ENCODE measurements at regions of chrX and their contacts with region 1.

Region 1: DNA sequence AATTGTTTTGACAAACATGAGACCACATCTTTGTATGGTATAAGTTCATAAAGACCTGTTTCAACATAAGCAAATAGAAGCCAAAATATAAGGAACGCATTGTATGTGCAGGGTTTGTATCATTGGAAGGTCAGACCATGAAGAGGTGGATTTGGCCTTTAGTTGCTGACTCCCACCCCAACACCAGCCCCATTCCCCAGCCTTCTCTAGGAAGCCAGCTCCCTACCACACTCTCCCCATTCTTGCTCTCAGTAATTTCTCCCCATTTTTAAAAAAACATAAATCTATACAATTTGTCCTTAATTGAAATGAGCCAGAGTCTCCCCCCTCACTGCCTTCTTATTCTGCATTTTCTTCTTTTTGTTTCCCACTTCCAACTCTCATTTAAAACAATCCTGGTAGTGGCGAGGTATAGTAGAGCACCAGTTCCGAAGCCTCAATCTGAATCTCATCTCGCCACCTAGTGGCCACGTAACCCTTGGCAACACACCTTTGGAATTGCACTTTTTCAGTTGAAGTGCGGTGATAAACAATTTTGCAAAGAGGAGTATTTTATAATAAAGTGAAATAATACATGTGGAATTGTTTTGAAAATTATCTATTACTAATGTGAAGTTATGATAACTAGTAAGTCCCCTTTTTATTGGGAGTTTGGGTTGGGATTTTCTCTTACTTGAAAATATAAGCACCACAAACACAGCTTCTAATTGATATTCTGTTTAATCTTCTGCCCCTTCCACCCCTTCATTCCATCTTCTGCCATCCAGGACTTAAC is 126.6 kb downstream of the ASB9 start:
- DNase-seq: no peak
- ATAC-seq: peak; percentile 94
- H3K4me3 ChIP-seq: no peak overlapping the region
- H3K27ac ChIP-seq: no peak overlapping the region
- H3K4me1 ChIP-seq: no peaks in the 10 kb centered on the region
- H3K27me3 ChIP-seq: no peaks in the 10 kb centered on the region; a peak in 1 of 4 replicates
- CTCF ChIP-seq: peak; percentile 79 to 81 (median 79)
- EP300 ChIP-seq: no peak
- POLR2A ChIP-seq: no peak
- RAD21 ChIP-seq: peak; percentile 80

Region 2: DNA sequence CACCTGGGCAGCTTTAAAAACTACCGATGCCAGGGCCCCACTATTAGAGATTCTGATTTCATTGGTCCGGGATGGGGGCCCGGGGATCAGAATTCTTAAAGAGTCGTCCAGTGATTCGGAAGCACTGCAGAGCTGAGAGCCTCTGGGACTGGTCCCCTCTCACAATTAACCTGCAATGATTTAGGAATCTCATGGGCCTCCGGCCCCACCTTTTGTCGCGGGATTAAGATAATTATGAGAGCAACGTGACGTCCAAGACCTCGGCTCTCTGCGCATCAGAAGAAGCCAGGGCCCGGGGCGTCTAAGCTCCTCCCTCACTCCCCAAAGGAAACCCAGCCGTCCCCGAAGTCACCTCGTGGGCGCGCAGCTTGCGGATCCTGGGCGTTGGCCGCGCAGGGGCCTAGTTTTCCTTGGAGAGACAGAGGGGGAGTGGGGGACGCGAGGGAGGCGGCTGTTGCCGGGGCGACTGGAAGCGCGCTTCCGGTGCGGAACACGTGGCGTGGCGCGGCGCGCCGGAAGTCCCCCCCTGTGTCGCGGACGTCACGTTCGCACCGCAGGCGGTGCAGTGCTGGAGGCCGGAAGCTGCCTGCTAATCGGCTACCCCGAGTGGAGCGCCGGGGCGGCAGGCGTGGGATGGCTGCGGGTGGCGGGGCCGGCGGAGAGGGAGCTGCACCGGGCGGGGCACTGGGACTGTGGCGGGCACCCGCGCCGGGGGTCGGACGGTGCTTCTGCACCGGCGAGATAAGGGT is 1113.6 kb before region 1 on chrX and contains the start of gene GEMIN8:
- CTCF ChIA-PET with region 1: no interaction called
- POLR2A ChIA-PET with region 1: no interaction called
- RAD21 ChIA-PET with region 1: no interaction called
- SMC1A ChIA-PET with region 1: no interaction called
- in situ Hi-C with region 1: loop called (anchors 10 kb)
- intact Hi-C with region 1: no loop called
- DNase-seq: peak; percentile 46
- ATAC-seq: peak; percentile 84
- H3K4me3 ChIP-seq: peak within 1 kb of the TSS; percentile 81
- H3K27ac ChIP-seq: peak within 1 kb of the TSS; percentile 77
- H3K4me1 ChIP-seq: peaks cover 6% of the 10 kb centered on the region
- H3K27me3 ChIP-seq: no peaks in the 10 kb centered on the region
- CTCF ChIP-seq: no peak
- EP300 ChIP-seq: 0 out of 4 replicates have a peak, but pooled peaks of 1 of the 2 experiments have one; percentile 4
- POLR2A ChIP-seq: peak; percentile 91
- RAD21 ChIP-seq: no peak
- polyA plus RNA-seq, gene GEMIN8: 18.4 to 29.5 TPM

Region 3: GRCh38 chrX:14095702-14096101 is 1047.5 kb before region 1 on chrX:
- CTCF ChIA-PET with region 1: interaction called, 16 read pairs
- POLR2A ChIA-PET with region 1: no interaction called
- RAD21 ChIA-PET with region 1: interaction called, 5 read pairs
- SMC1A ChIA-PET with region 1: interaction called, 3 read pairs
- in situ Hi-C with region 1: loop called (anchors 10 kb)
- intact Hi-C with region 1: loop called (anchors 5 kb)
- DNase-seq: peak; percentile 4
- ATAC-seq: peak; percentile 97
- H3K4me3 ChIP-seq: no peak overlapping the region
- H3K27ac ChIP-seq: no peak overlapping the region
- H3K4me1 ChIP-seq: no peaks in the 10 kb centered on the region
- H3K27me3 ChIP-seq: no peaks in the 10 kb centered on the region; a peak in 1 of 4 replicates
- CTCF ChIP-seq: peak; percentile 72 to 80 (median 76)
- EP300 ChIP-seq: no peak
- POLR2A ChIP-seq: no peak
- RAD21 ChIP-seq: peak; percentile 77

Region 4: GRCh38 chrX:14697451-14697850 is 445.8 kb before region 1 on chrX:
- CTCF ChIA-PET with region 1: no interaction called
- POLR2A ChIA-PET with region 1: no interaction called
- RAD21 ChIA-PET with region 1: no interaction called
- SMC1A ChIA-PET with region 1: interaction called, 3 read pairs
- in situ Hi-C with region 1: no loop called
- intact Hi-C with region 1: loop called (anchors 10 kb)
- DNase-seq: no peak
- ATAC-seq: peak; percentile 96
- H3K4me3 ChIP-seq: no peak overlapping the region
- H3K27ac ChIP-seq: no peak overlapping the region
- H3K4me1 ChIP-seq: no peaks in the 10 kb centered on the region
- H3K27me3 ChIP-seq: no peaks in the 10 kb centered on the region
- CTCF ChIP-seq: peak; percentile 53 to 66 (median 64)
- EP300 ChIP-seq: no peak
- POLR2A ChIP-seq: no peak
- RAD21 ChIP-seq: peak; percentile 62

Region 5: DNA sequence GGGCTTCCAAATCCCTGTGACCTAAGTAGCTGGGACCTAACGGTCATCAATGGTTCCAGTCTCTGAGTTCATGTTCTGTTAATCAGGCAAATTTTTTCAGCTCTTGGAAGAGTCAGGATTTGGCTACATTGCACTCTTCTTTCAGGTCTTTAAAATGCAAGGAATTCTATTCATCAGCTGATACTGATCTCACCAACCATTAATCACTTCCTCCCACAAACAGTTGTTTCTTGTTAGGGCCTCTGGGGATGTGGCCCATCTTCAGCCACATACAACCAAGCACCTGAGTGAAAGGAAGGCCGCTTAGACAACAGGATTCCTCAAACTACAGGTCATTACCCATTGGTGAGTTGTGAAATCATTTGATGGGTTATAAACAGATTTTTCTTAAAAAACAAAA is 342.1 kb before region 1 on chrX:
- CTCF ChIA-PET with region 1: no interaction called
- POLR2A ChIA-PET with region 1: no interaction called
- RAD21 ChIA-PET with region 1: no interaction called
- SMC1A ChIA-PET with region 1: no interaction called
- in situ Hi-C with region 1: no loop called
- intact Hi-C with region 1: no loop called
- DNase-seq: no peak
- ATAC-seq: no peak
- H3K4me3 ChIP-seq: no peak overlapping the region
- H3K27ac ChIP-seq: no peak overlapping the region
- H3K4me1 ChIP-seq: no peaks in the 10 kb centered on the region
- H3K27me3 ChIP-seq: no peaks in the 10 kb centered on the region
- CTCF ChIP-seq: no peak
- EP300 ChIP-seq: no peak
- POLR2A ChIP-seq: no peak
- RAD21 ChIP-seq: no peak

Region 6: DNA sequence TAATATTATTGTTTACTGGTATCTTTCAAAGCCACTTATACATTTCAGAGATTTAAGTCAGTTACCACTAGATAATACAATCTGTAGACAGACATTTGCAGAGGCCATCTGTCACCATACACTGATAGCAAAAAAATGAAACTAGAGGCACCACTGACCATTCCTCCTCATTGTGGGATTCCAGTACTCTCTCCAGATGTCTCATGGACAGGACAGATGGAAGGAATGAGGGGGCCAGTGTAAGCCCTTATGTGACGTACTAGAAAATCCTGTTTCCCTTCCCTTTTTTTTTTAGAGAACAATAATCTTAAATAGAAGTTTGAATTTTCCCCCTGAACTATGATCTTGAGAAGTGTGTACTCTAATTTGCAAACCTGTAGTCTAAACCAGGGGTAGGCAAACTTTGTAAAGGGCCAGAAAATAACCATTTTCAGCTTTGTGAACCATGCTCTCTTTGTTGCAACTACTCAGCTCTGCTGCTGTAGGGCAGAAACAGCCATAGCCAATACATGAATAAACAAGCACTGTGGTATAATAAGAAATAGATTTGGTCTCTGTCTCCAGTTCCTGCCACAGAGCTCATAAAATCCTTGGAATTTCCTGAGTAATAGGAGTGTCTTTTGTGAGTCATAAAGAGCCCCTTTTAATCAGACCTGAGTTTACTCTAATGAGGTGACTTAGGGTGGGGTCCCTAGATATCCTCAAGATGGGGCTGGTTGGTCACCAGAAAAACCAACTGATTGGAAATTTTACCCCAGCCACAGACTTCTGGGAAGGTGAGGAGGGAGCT is 179.6 kb before region 1 on chrX:
- CTCF ChIA-PET with region 1: no interaction called
- POLR2A ChIA-PET with region 1: no interaction called
- RAD21 ChIA-PET with region 1: no interaction called
- SMC1A ChIA-PET with region 1: interaction called, 11 read pairs
- in situ Hi-C with region 1: no loop called
- intact Hi-C with region 1: no loop called
- DNase-seq: no peak
- ATAC-seq: no peak
- H3K4me3 ChIP-seq: no peak overlapping the region
- H3K27ac ChIP-seq: no peak overlapping the region
- H3K4me1 ChIP-seq: no peaks in the 10 kb centered on the region
- H3K27me3 ChIP-seq: no peaks in the 10 kb centered on the region
- CTCF ChIP-seq: no peak
- EP300 ChIP-seq: no peak
- POLR2A ChIP-seq: no peak
- RAD21 ChIP-seq: no peak

Region 7: GRCh38 chrX:15033917-15034316 is 109.3 kb before region 1 on chrX:
- CTCF ChIA-PET with region 1: no interaction called
- POLR2A ChIA-PET with region 1: no interaction called
- RAD21 ChIA-PET with region 1: no interaction called
- SMC1A ChIA-PET with region 1: no interaction called
- in situ Hi-C with region 1: no loop called
- intact Hi-C with region 1: no loop called
- DNase-seq: no peak
- ATAC-seq: peak; percentile 65
- H3K4me3 ChIP-seq: no peak overlapping the region
- H3K27ac ChIP-seq: no peak overlapping the region
- H3K4me1 ChIP-seq: no peaks in the 10 kb centered on the region
- H3K27me3 ChIP-seq: no peaks in the 10 kb centered on the region
- CTCF ChIP-seq: no peak
- EP300 ChIP-seq: no peak
- POLR2A ChIP-seq: no peak
- RAD21 ChIP-seq: no peak

Region 8: GRCh38 chrX:15128861-15129260 is 14.4 kb before region 1 on chrX:
- CTCF ChIA-PET with region 1: interaction called, 17 read pairs
- POLR2A ChIA-PET with region 1: interaction called, 3 read pairs
- RAD21 ChIA-PET with region 1: interaction called, 4 read pairs
- SMC1A ChIA-PET with region 1: interaction called, 3 read pairs
- in situ Hi-C with region 1: no loop called
- intact Hi-C with region 1: no loop called
- DNase-seq: no peak
- ATAC-seq: no peak
- H3K4me3 ChIP-seq: no peak overlapping the region
- H3K27ac ChIP-seq: no peak overlapping the region
- H3K4me1 ChIP-seq: no peaks in the 10 kb centered on the region
- H3K27me3 ChIP-seq: no peaks in the 10 kb centered on the region
- CTCF ChIP-seq: no peak
- EP300 ChIP-seq: no peak
- POLR2A ChIP-seq: no peak
- RAD21 ChIP-seq: no peak

Region 9: DNA sequence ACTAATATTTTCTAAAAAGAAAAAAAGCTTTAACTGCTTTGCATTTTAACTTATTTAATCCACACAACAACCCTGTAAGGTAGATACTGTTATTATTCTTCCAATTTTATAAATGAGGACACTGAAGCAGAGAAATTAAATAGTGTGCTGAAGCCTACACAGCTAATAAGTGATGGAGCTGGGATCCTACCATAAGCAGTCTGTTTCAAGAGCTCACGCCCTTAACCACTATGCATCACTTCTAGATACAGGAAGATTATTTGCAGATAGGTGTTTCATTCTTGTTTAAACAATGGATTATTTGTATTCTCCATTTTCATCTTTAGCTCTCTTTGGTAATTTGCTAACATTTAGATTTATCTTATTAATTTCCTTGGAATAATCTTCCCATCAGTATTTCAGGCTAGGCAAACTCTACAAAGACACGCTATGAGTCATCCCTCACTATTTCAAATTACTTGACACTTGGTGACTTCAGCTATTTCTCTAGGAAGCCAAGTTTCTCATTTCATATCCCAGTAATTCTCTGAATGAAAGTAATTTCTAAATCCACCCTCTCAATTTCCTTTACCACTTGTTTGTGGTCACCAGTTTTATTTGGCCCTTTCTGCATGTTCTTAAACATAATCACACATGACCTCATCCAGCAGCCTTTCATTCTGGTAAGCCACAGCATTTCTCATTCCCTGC is 59.4 kb after region 1 on chrX:
- CTCF ChIA-PET with region 1: interaction called, 22 read pairs
- POLR2A ChIA-PET with region 1: no interaction called
- RAD21 ChIA-PET with region 1: interaction called, 22 read pairs
- SMC1A ChIA-PET with region 1: interaction called, 33 read pairs
- in situ Hi-C with region 1: no loop called
- intact Hi-C with region 1: no loop called
- DNase-seq: peak; percentile 15
- ATAC-seq: peak; percentile 69
- H3K4me3 ChIP-seq: no peak overlapping the region
- H3K27ac ChIP-seq: no peak overlapping the region
- H3K4me1 ChIP-seq: 0 out of 2 replicates have a peak, but pooled peaks cover 5% of the 10 kb centered on the region
- H3K27me3 ChIP-seq: no peaks in the 10 kb centered on the region
- CTCF ChIP-seq: no peak
- EP300 ChIP-seq: peak in 1 of 2 experiments; percentile 69; a peak in 3 of 4 replicates
- POLR2A ChIP-seq: no peak
- RAD21 ChIP-seq: no peak

Region 10: GRCh38 chrX:15269618-15270521 is 126.6 kb after region 1 on chrX and contains the start of gene ASB9:
- CTCF ChIA-PET with region 1: no interaction called
- POLR2A ChIA-PET with region 1: no interaction called
- RAD21 ChIA-PET with region 1: no interaction called
- SMC1A ChIA-PET with region 1: no interaction called
- in situ Hi-C with region 1: no loop called
- intact Hi-C with region 1: no loop called
- DNase-seq: no peak
- ATAC-seq: peak; percentile 96
- H3K4me3 ChIP-seq: no peak within 1 kb of the TSS
- H3K27ac ChIP-seq: no peak within 1 kb of the TSS
- H3K4me1 ChIP-seq: no peaks in the 10 kb centered on the region
- H3K27me3 ChIP-seq: no peaks in the 10 kb centered on the region
- CTCF ChIP-seq: no peak
- EP300 ChIP-seq: no peak
- POLR2A ChIP-seq: no peak
- RAD21 ChIP-seq: no peak
- polyA plus RNA-seq, gene ASB9: 0.91 to 1.1 TPM

Region 11: DNA sequence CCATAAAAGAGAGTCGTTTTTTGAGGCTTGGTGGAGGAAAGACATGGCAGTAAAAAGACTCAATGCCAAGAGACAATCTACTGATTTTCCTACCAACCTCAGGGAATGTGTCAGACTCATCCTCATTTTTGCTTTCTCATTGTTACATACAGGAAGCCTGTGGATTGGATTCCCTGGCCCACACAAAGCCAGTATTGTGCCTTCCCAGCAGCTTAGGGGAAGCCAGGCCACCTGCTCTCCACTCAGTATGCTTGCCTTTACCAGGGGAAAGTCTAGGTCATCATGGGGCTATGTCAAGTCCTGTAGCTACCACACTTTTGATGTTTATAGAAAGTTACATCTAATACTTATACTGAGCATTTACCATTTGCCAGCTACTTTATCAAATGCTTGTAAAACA is 368.3 kb after region 1 on chrX:
- CTCF ChIA-PET with region 1: no interaction called
- POLR2A ChIA-PET with region 1: no interaction called
- RAD21 ChIA-PET with region 1: no interaction called
- SMC1A ChIA-PET with region 1: no interaction called
- in situ Hi-C with region 1: no loop called
- intact Hi-C with region 1: no loop called
- DNase-seq: no peak
- ATAC-seq: no peak
- H3K4me3 ChIP-seq: no peak overlapping the region
- H3K27ac ChIP-seq: no peak overlapping the region
- H3K4me1 ChIP-seq: no peaks in the 10 kb centered on the region
- H3K27me3 ChIP-seq: no peaks in the 10 kb centered on the region; a peak in 1 of 4 replicates
- CTCF ChIP-seq: no peak
- EP300 ChIP-seq: no peak
- POLR2A ChIP-seq: no peak
- RAD21 ChIP-seq: no peak